ENCODE measurements at regions of chr2 and their contacts with region 1.

Region 1: GRCh38 chr2:85888684-85889626 is at the start of gene ST3GAL5:
- DNase-seq: no peak
- H3K4me3 ChIP-seq: peak within 1 kb of the TSS; percentile 69
- H3K27me3 ChIP-seq: no peaks in the 10 kb centered on the region
- CTCF ChIP-seq: peak; percentile 74
- polyA plus RNA-seq, gene ST3GAL5: 16.0 and 19.7 TPM in 2 replicates

Region 2: GRCh38 chr2:85737481-85737880 is 151.5 kb before region 1 on chr2:
- CTCF ChIA-PET with region 1: no interaction called
- POLR2A ChIA-PET with region 1: no interaction called
- DNase-seq: peak; percentile 86
- H3K4me3 ChIP-seq: no peak overlapping the region
- H3K27me3 ChIP-seq: no peaks in the 10 kb centered on the region
- CTCF ChIP-seq: no peak

Region 3: GRCh38 chr2:85826990-85827878 is 61.7 kb before region 1 on chr2:
- CTCF ChIA-PET with region 1: interaction called, 87 read pairs
- POLR2A ChIA-PET with region 1: no interaction called
- DNase-seq: no peak
- H3K4me3 ChIP-seq: no peak overlapping the region
- H3K27me3 ChIP-seq: no peaks in the 10 kb centered on the region; the same call in 1 of the 2 replicates
- CTCF ChIP-seq: peak; percentile 93

Region 4: DNA sequence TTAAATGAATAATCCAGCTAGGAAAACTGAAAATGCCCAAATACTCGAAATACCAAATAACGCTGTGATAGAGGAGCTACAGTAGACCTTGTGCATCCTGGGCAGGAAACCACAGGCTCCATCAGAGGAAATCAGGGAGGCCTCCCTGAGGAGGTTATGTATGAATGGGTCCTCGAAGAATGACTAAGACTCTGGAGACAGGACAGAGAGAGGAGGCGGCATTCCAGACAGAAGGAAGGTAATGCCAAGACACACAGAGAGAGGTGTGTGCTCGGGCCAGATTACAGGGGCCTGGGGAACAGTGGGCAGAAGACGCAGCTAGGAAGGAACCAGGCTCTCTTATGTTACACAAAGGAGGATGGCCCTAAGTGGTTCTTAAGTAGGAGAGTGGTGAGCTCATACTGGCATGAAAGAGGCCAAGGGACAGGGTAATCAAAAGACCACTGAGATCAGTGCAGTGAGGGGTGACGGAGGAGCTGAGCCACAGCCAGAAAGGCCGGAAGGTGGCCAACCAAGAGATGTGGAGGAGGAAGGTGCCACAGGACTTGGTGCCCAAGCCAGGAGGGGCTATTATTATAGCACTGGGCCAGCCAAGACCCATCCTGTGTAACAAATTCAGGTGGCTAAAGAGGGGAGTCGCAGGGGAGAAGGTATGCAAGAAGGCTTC is 10.1 kb before region 1 on chr2:
- CTCF ChIA-PET with region 1: interaction called, 10 read pairs
- POLR2A ChIA-PET with region 1: no interaction called
- DNase-seq: no peak
- H3K4me3 ChIP-seq: no peak overlapping the region
- H3K27me3 ChIP-seq: no peaks in the 10 kb centered on the region
- CTCF ChIP-seq: no peak

Region 5: DNA sequence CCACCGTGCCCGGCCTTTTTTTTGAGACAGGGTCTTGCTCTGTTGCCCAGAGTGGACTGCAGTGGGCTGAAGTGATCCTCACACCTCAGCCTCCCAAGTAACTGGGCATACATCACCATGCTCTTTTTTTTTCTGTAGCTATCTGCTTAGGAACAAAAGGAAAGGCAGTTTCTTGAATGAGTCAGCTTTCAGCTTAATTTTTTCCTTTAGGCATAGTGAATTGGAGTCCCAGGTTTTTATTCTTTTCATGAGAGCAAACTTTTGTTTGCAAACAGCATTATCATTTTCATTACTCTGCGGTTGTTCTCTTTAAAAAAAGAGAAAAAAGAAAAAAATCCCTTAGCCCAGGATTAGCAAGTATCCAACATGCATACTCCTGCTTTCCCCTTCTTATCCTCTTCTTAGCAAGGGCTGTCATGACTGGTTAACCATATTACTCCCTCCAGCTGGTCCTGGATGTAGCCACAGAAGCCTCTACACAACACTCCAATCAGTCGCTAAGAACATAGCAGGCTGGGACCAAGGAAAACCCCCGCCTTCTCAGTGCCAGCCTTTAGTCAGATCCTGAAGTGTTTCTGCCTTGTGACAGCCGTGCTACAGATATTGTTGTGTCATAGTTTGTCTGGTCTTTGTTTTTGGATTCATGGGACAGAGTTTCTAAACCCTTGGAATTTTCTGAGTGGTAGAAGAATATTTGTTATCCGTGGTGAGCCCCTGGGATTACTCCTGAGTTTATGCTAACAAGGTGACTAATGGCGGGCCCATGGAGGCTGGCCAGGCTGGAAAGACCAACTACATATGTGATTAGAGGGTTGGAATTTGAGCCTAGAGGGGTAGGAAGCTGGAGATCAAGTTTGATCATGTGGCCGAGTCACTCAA is 23.1 kb after region 1 on chr2:
- CTCF ChIA-PET with region 1: interaction called, 5 read pairs
- POLR2A ChIA-PET with region 1: interaction called, 17 read pairs
- DNase-seq: peak; percentile 49
- H3K4me3 ChIP-seq: no peak overlapping the region
- H3K27me3 ChIP-seq: no peaks in the 10 kb centered on the region
- CTCF ChIP-seq: no peak

Region 6: DNA sequence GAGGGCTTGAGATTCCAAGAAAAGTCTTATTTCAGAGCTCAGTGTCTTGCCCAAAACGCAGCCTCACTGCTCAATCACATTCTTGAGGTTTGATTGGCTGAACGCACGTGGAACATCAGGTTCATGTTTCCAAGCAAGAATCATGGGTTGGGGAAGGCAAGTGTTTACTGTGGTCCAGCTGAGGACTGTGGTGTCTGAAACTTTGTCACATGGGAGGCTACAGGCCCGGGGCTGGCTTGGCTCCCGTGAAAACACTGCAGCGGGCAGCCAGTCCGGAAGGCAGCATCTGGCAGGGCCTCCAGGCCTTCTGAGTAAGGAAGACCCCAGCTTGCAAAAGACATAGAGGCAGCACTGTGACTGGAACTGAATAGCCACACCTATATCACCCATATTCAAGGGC is 132.0 kb after region 1 on chr2:
- CTCF ChIA-PET with region 1: interaction called, 15 read pairs
- POLR2A ChIA-PET with region 1: no interaction called
- DNase-seq: no peak
- H3K4me3 ChIP-seq: no peak overlapping the region
- H3K27me3 ChIP-seq: no peaks in the 10 kb centered on the region; the same call in 1 of the 2 replicates
- CTCF ChIP-seq: no peak

Region 7: GRCh38 chr2:86079981-86080911 is 191.3 kb after region 1 on chr2:
- CTCF ChIA-PET with region 1: interaction called, 79 read pairs
- POLR2A ChIA-PET with region 1: no interaction called
- DNase-seq: no peak
- H3K4me3 ChIP-seq: no peak overlapping the region
- H3K27me3 ChIP-seq: no peaks in the 10 kb centered on the region
- CTCF ChIP-seq: peak; percentile 91

Measured in BJ (cell line).